ENCODE measurements at regions of chr2 and their contacts with region 1.

Region 1: DNA sequence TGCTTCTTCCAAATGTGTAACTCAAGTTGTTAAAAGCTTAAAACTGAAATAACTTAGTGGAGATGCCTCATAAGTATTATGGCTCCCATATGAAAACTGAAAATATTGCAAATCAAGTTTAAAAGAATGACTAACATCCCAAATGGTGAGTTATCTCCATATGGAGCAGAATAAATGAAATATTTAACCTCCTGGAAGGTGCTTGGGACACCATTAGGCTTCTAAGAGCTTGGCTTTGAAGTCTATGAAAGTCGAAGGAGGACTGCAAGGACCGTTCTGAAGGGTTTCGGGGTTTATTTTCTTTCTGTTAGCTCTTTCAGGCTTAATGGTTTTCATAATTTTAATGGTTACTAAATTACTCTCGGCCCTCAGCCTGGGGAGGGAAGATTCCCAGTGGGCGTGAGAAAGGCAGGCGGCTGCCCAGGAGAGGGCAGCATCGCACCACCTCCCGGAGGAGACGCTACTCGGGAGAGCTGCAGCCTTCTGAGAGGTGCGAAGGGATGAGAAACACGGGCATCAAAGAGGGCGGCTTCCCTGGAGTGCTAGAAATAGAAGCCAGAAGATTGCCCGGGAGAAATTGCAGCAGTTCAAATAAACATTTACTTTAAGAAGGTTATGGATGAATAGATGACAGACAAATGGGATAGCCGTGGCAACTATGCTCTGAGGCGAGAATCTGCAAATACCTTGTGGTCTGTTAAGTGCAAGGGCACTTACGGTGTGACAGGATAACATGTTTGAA is 43.1 kb downstream of the MAP3K19 start:
- DNase-seq: peak; percentile 49 to 81
- ATAC-seq: peak; percentile 99

Region 2: DNA sequence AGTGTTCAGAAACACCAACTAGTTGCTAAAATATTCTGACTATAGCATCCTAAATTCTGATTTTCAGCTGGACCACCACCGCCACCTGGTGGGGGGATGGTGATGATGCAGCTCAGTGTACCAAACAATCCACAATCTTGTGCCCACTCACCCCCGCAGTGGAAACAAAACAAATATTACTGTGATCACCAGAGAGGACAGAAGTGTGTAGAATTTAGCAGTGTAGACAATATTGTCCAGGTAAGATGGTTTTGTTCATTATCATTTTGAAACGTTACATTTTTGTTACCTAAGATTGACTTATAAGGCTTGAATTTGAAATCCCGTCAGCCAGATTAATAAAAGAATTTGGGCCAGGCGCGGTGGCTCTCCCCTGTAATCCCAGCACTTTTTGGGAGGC is 705.8 kb after region 1 on chr2:
- intact Hi-C with region 1: loop called in 1 of 2 experiments (anchors 10 kb)
- DNase-seq: peak in 1 of 2 donors; percentile 58
- ATAC-seq: peak; percentile 64